ENCODE measurements at regions of chr17 and their contacts with region 1.

Region 1: GRCh38 chr17:58411438-58411797 is 5.9 kb downstream of the RNF43 start:
- DNase-seq: peak; percentile 21
- H3K4me3 Mint-ChIP-seq: no peak overlapping the region
- H3K27ac Mint-ChIP-seq: no peak overlapping the region
- H3K4me1 Mint-ChIP-seq: peaks cover 41% of the 10 kb centered on the region
- H3K27me3 Mint-ChIP-seq: no peaks in the 10 kb centered on the region
- CTCF ChIP-seq: no peak

Region 2: DNA sequence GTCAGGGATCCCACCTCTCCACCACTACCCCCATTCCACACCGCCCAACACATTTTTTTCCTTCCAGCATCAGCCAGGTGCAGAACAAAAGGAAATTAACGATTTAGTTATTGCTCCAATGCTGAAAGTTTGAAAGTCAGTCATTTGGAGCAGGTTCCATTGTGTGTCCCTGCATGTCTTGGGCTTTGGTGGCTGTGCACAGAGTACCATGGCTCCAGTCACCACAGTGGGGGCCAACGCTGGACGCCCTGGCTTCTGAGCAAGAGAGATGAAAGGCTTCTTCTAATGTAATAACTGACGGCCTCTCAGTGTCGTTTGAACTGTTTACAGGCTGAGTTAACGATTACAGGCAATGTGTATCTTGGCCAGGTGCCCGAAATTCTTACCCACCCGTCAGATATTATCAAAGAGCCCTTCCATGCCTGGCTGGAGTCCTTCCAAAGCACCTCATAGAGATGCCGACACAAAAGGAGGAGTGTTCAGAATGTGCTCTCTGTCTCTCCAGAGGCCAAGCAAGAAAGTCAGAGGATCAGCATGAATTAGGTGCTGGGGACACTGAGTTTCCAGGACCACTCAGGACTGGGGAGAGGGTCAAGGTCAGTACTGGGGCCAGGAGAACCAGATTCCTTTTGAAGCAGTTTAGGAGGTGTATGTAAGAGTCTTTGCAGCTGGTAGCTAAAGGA is 20.0 kb before region 1 on chr17:
- CTCF ChIA-PET with region 1: interaction called, 6 read pairs
- POLR2A ChIA-PET with region 1: interaction called, 63 read pairs
- intact Hi-C with region 1: no loop called
- DNase-seq: peak; percentile 97
- H3K4me3 Mint-ChIP-seq: peak overlapping the region; percentile 2
- H3K27ac Mint-ChIP-seq: peak overlapping the region; percentile 59
- H3K4me1 Mint-ChIP-seq: peaks cover 40% of the 10 kb centered on the region
- H3K27me3 Mint-ChIP-seq: no peaks in the 10 kb centered on the region
- CTCF ChIP-seq: no peak